ENCODE measurements at regions of chr12 and their contacts with region 1.

Region 1: GRCh38 chr12:10385166-10385613 is 4.7 kb downstream of the KLRK1 start:
- DNase-seq: no peak
- ATAC-seq: peak; percentile 35
- H3K4me3 Mint-ChIP-seq: peak overlapping the region; percentile 70
- H3K27ac Mint-ChIP-seq: peak overlapping the region; percentile 83
- H3K4me1 Mint-ChIP-seq: peaks cover 57% of the 10 kb centered on the region
- H3K27me3 Mint-ChIP-seq: no peaks in the 10 kb centered on the region

Region 2: GRCh38 chr12:9971181-9971580 is 414.0 kb before region 1 on chr12 and contains the start of gene CLEC12A:
- CTCF ChIA-PET with region 1: no interaction called
- POLR2A ChIA-PET with region 1: no interaction called
- DNase-seq: no peak
- ATAC-seq: no peak
- H3K4me3 Mint-ChIP-seq: no peak within 1 kb of the TSS
- H3K27ac Mint-ChIP-seq: no peak within 1 kb of the TSS
- H3K4me1 Mint-ChIP-seq: no peaks in the 10 kb centered on the region
- H3K27me3 Mint-ChIP-seq: no peaks in the 10 kb centered on the region
- total RNA-seq, gene CLEC12A: 4.8 to 6.3 TPM

Region 3: DNA sequence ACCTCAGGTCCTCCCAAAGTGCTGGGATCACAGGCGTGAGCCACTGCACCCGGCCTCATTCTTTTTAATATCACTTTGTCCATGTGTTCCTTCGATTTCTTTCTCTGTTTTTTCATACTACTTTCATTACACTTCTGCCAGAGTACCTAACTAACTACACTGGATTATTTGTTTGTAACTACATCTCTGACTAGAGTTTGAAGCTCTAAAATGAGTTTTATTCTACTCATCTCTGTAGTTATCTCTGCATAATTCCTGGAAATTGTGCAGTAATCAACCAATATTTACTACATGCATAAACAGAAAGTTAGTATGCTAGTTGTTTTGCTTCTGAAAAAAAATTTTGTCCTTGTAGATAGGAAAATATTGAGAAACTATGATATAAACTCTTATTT is 10.6 kb before region 1 on chr12:
- CTCF ChIA-PET with region 1: interaction called, 5 read pairs
- POLR2A ChIA-PET with region 1: interaction called, 13 read pairs
- DNase-seq: no peak
- ATAC-seq: no peak
- H3K4me3 Mint-ChIP-seq: peak overlapping the region; percentile 27
- H3K27ac Mint-ChIP-seq: peak overlapping the region; percentile 48
- H3K4me1 Mint-ChIP-seq: peaks cover 75% of the 10 kb centered on the region
- H3K27me3 Mint-ChIP-seq: no peaks in the 10 kb centered on the region

Region 4: GRCh38 chr12:10400829-10401228 is 15.6 kb after region 1 on chr12:
- CTCF ChIA-PET with region 1: no interaction called
- POLR2A ChIA-PET with region 1: interaction called, 14 read pairs
- DNase-seq: no peak
- ATAC-seq: peak; percentile 39
- H3K4me3 Mint-ChIP-seq: peak overlapping the region; percentile 56
- H3K27ac Mint-ChIP-seq: peak overlapping the region; percentile 33
- H3K4me1 Mint-ChIP-seq: peaks cover 41% of the 10 kb centered on the region
- H3K27me3 Mint-ChIP-seq: no peaks in the 10 kb centered on the region